ENCODE measurements at regions of chr11 and their contacts with region 1.

Region 1: GRCh38 chr11:67482825-67483798 is at the start of gene AIP:
- DNase-seq: peak; percentile 93 to 99 (median 97)
- ATAC-seq: peak; percentile 77 to 84 (median 83)
- H3K4me3 ChIP-seq: peak within 1 kb of the TSS; percentile 62 to 77
- H3K4me3 Mint-ChIP-seq: peak within 1 kb of the TSS; percentile 86 to 98 (median 95)
- H3K27ac ChIP-seq: peak within 1 kb of the TSS; percentile 93
- H3K27ac Mint-ChIP-seq: peak within 1 kb of the TSS; percentile 99
- H3K4me1 ChIP-seq: peaks cover 23 to 62% of the 10 kb centered on the region in 2 experiments
- H3K4me1 Mint-ChIP-seq: peaks cover 52 to 55% (median 54%) of the 10 kb centered on the region in 3 donors
- H3K27me3 ChIP-seq: no peaks in the 10 kb centered on the region
- H3K27me3 Mint-ChIP-seq: no peaks in the 10 kb centered on the region
- total RNA-seq, gene AIP: 114 to 168 (median 154) TPM

Region 2: DNA sequence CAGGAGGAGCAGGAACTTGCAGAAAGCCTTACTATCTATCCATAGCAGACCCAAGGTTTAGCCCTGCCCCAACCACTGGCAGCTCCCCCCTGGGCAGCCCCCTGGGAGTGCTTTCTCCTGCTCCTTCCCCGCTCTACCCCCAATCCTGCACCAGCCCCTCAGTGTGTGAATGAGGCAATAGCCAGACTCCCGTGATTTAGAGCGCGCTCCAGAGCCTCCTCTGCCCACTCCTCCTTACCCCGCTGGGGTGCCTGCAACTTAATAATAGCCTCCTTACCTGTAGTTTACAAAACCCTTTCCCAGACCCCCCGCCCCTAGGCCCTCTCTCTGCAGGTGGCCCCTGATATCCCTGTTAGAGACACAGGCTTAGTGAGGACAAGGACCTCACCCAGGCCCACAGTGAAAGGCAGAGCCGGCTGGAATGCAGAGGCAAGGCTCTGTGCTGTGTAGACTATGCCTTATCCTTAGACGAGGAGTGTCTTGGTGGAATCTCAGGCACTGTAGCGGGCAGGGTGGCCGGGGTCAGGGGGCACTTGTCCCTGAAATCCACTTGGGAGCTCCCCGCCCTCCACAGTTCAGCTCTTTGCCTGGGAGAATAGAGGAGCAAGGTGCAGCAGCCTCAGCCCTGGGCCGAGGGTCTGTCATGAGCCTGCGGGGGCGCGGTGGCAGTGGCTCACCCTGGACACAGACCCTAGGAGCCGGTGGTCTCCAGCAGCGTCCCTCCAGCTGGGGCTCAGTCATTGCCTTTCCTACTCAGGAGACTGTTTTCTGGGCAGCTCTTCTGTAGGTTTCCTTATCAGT is 71.9 kb before region 1 on chr11:
- CTCF ChIA-PET with region 1: interaction called in 1 of 2 experiments, 5 read pairs
- POLR2A ChIA-PET with region 1: interaction called in 1 of 2 experiments, 11 read pairs
- DNase-seq: no peak
- ATAC-seq: no peak
- H3K4me3 ChIP-seq: peak overlapping the region in 1 of 2 donors; percentile 63
- H3K4me3 Mint-ChIP-seq: peak overlapping the region in 2 of 3 donors; percentile 24 to 97
- H3K27ac ChIP-seq: peak overlapping the region; percentile 74
- H3K27ac Mint-ChIP-seq: peak overlapping the region; percentile 97
- H3K4me1 ChIP-seq: peaks cover 67 to 97% of the 10 kb centered on the region in 2 experiments
- H3K4me1 Mint-ChIP-seq: peaks cover 79 to 86% (median 81%) of the 10 kb centered on the region in 3 donors
- H3K27me3 ChIP-seq: no peaks in the 10 kb centered on the region
- H3K27me3 Mint-ChIP-seq: no peaks in the 10 kb centered on the region

Region 3: GRCh38 chr11:67416416-67417335 is 66.4 kb before region 1 on chr11:
- CTCF ChIA-PET with region 1: interaction called in 1 of 2 experiments, 5 read pairs
- POLR2A ChIA-PET with region 1: interaction called in 1 of 2 experiments, 11 read pairs
- DNase-seq: peak; percentile 75 to 95 (median 90)
- ATAC-seq: peak; percentile 64 to 69 (median 66)
- H3K4me3 ChIP-seq: peak overlapping the region; percentile 19 to 39
- H3K4me3 Mint-ChIP-seq: peak overlapping the region; percentile 77 to 86 (median 81)
- H3K27ac ChIP-seq: peak overlapping the region; percentile 72
- H3K27ac Mint-ChIP-seq: peak overlapping the region; percentile 98 to 99
- H3K4me1 ChIP-seq: peaks cover 58 to 91% of the 10 kb centered on the region in 2 experiments
- H3K4me1 Mint-ChIP-seq: peaks cover 67 to 76% (median 73%) of the 10 kb centered on the region in 3 donors
- H3K27me3 ChIP-seq: no peaks in the 10 kb centered on the region
- H3K27me3 Mint-ChIP-seq: no peaks in the 10 kb centered on the region

Region 4: DNA sequence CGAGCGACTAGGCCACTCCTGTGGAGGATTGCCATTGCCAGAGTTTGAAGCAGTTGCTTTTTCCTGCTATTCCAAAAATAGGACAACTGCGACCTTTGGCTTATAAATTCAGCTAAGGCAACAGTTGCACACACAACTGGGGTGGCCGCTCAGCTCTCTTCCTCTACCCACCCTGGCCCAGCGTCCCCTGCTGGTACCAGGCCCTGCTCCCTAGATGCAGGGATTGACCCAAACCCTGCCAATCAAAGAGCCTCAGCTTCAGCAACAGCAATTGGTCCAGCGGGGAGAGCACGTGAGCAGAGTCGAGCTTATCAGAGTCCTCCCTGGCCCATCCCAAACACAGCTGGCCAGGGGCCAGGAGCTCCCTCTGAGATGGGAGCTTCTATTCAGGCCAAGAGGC is 62.2 kb after region 1 on chr11:
- CTCF ChIA-PET with region 1: no interaction called
- POLR2A ChIA-PET with region 1: no interaction called
- DNase-seq: no peak
- ATAC-seq: no peak
- H3K4me3 ChIP-seq: no peak overlapping the region
- H3K4me3 Mint-ChIP-seq: no peak overlapping the region
- H3K27ac ChIP-seq: no peak overlapping the region
- H3K27ac Mint-ChIP-seq: no peak overlapping the region
- H3K4me1 ChIP-seq: no peaks in the 10 kb centered on the region
- H3K4me1 Mint-ChIP-seq: no peaks in the 10 kb centered on the region
- H3K27me3 ChIP-seq: peaks cover 0 to 11% of the 10 kb centered on the region in 2 experiments
- H3K27me3 Mint-ChIP-seq: peaks cover 0 to 3% of the 10 kb centered on the region in 2 donors

Measured in T-cell (primary cell).